Heart right ventricle (tissue), 16 donors: ENCODE measurements at regions of chr15 and their contacts with region 1.

Region 1: DNA sequence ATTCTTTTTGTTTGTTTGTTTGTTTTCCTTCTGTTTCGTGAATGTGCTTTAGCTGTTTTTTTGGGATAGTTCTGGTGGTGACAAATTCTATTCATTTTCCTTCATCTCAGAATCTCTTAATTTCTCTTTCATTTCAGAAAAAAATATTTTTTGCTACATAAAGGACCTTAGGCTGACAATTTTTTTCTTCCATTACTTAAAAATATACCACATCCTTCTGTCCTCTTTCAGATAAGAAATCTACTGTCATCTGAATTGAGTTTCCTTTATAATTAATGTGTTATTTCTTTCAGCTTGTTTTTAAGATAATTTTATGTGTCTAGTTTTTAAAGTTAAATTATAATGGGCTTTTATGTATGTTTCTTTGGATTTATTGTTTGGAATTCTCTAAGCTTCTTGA is 47.6 kb downstream of the IL16 start:
- DNase-seq: no peak
- ATAC-seq: no peak
- H3K4me3 ChIP-seq: no peak overlapping the region
- H3K27ac ChIP-seq: no peak overlapping the region
- H3K4me1 ChIP-seq: peaks cover 0 to 4% (median 0%) of the 10 kb centered on the region in 9 donors
- H3K27me3 ChIP-seq: no peaks in the 10 kb centered on the region
- CTCF ChIP-seq: no peak

Region 2: GRCh38 chr15:81189583-81190283 is 54.6 kb before region 1 on chr15:
- intact Hi-C with region 1: loop called in 1 of 10 experiments (anchors 10 kb)
- DNase-seq: peak; percentile 45 to 61
- ATAC-seq: peak; percentile 63 to 93 (median 85)
- H3K4me3 ChIP-seq: no peak overlapping the region
- H3K27ac ChIP-seq: peak overlapping the region; percentile 5 to 84 (median 64)
- H3K4me1 ChIP-seq: peaks cover 0 to 2% (median 0%) of the 10 kb centered on the region in 9 donors
- H3K27me3 ChIP-seq: peaks cover 0 to 4% (median 0%) of the 10 kb centered on the region in 7 donors
- CTCF ChIP-seq: no peak